ENCODE measurements at regions of chr13 and their contacts with region 1.

Region 1: DNA sequence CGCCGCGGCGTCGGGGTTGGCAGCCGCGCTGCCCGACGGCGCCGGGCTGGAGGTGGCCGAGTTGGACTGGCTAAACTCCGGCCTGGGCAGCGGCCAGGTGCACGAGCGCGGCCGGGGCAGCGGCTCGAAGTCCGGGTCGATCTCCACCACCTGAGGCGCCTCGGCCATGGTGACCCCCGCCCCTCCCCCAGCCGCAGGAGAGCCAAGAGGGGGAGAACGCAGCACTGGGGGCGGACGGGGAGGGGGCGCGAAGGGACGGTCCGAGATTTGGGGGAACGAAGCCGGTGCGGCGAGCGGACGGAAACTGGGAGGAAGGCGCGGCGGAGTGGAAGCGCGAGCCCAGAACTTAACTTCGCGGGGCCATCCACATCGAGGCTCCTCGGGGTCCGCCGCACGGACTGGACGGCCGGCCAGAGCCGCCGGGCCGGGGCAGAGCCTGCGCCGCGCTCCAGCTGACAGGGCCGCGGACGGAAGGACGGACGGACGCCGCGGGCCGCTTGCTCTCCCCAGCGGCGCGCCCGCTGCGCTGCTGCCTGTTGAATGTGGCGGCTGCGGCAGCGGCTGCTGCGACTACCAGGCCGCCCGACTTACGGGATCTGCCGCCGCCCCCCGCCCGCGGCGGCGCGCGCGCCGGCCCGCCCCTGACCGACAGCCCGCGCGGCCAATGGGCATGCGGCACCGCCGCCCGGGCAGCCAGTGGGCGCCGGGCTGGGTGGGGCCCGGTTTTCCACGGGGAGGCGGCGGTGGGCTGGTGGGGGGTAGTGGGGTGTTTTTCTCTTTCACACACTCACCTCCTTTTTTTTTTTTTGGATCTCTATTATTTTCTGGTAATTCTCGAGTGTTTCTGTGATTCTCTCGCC is at the start of gene FOXO1:
- DNase-seq: peak; percentile 93 to 94
- ATAC-seq: peak; percentile 70 to 89 (median 82)
- H3K4me3 ChIP-seq: peak within 1 kb of the TSS; percentile 90
- H3K4me3 Mint-ChIP-seq: peak within 1 kb of the TSS; percentile 92
- H3K27ac ChIP-seq: peak within 1 kb of the TSS; percentile 83
- H3K27ac Mint-ChIP-seq: peak within 1 kb of the TSS; percentile 83 to 95
- H3K4me1 ChIP-seq: peaks cover 21% of the 10 kb centered on the region
- H3K4me1 Mint-ChIP-seq: peaks cover 29 to 33% of the 10 kb centered on the region in 2 donors
- H3K27me3 ChIP-seq: no peaks in the 10 kb centered on the region
- H3K27me3 Mint-ChIP-seq: no peaks in the 10 kb centered on the region
- CTCF ChIP-seq: no peak
- total RNA-seq, gene FOXO1: 23.9 to 29.8 (median 27.6) TPM

Region 2: DNA sequence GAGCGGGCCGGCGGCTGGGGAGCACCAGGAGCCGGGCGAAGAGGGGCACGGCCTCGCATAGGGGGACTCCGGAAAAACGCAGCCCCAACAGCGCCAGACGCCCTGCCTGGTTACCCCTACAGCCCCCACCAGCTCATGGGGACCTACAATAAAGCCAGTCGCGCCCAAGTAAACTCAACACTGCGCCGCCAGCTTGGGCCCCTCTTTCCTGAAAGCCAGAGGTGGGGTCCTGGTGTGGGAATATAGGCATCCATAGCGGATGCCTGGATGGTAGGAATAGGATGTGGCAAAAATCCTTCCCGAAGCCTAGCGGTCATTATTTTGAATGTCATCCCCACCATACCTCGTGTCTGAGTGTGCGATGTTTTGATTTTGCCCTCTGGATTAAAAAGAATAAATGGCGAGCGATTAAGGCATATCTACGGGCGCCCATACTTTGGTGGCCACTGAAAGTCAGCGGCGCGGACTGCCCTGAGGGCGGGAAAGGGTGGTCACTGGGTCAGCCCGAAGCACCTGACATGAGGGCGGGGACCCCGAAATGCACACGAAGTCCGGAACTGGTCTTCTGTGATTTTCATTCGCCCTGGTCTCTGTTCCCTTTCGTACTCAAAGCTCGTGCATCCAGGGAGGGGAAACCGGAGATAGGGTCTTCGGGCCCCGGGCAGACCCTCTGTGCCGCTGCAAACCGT is 1628.3 kb before region 1 on chr13 and contains the starts of genes NHLRC3 and PROSER1:
- intact Hi-C with region 1: loop called (anchors 5 kb)
- DNase-seq: peak; percentile 75 to 92
- ATAC-seq: peak; percentile 77 to 91 (median 80)
- H3K4me3 ChIP-seq: peak within 1 kb of the TSS; percentile 60
- H3K4me3 Mint-ChIP-seq: peak within 1 kb of the TSS; percentile 93
- H3K27ac ChIP-seq: peak within 1 kb of the TSS; percentile 92
- H3K27ac Mint-ChIP-seq: peak within 1 kb of the TSS; percentile 96
- H3K4me1 ChIP-seq: peaks cover 4% of the 10 kb centered on the region
- H3K4me1 Mint-ChIP-seq: peaks cover 59 to 72% of the 10 kb centered on the region in 2 donors
- H3K27me3 ChIP-seq: no peaks in the 10 kb centered on the region
- H3K27me3 Mint-ChIP-seq: no peaks in the 10 kb centered on the region
- CTCF ChIP-seq: no peak
- total RNA-seq, gene NHLRC3: 26.0 to 36.8 (median 28.3) TPM
- total RNA-seq, gene PROSER1: 58.6 to 70.2 (median 61.7) TPM

Region 3: GRCh38 chr13:40221460-40222201 is 444.6 kb before region 1 on chr13:
- intact Hi-C with region 1: loop called (anchors 10 kb)
- DNase-seq: peak; percentile 24 to 84
- ATAC-seq: peak; percentile 71 to 76 (median 73)
- H3K4me3 ChIP-seq: no peak overlapping the region
- H3K4me3 Mint-ChIP-seq: peak overlapping the region; percentile 32
- H3K27ac ChIP-seq: peak overlapping the region; percentile 70
- H3K27ac Mint-ChIP-seq: peak overlapping the region; percentile 74 to 88
- H3K4me1 ChIP-seq: peaks cover 21% of the 10 kb centered on the region
- H3K4me1 Mint-ChIP-seq: peaks cover 33 to 34% of the 10 kb centered on the region in 2 donors
- H3K27me3 ChIP-seq: no peaks in the 10 kb centered on the region
- H3K27me3 Mint-ChIP-seq: no peaks in the 10 kb centered on the region
- CTCF ChIP-seq: no peak

Region 4: GRCh38 chr13:40388617-40389016 is 277.7 kb before region 1 on chr13:
- intact Hi-C with region 1: loop called (anchors 1 kb)
- DNase-seq: peak; percentile 75 to 93
- ATAC-seq: peak; percentile 90 to 97 (median 94)
- H3K4me3 ChIP-seq: peak overlapping the region; percentile 45
- H3K4me3 Mint-ChIP-seq: peak overlapping the region; percentile 84
- H3K27ac ChIP-seq: peak overlapping the region; percentile 99
- H3K27ac Mint-ChIP-seq: peak overlapping the region; percentile 93 to 97
- H3K4me1 ChIP-seq: peaks cover 25% of the 10 kb centered on the region
- H3K4me1 Mint-ChIP-seq: peaks cover 42% of the 10 kb centered on the region in 2 donors
- H3K27me3 ChIP-seq: no peaks in the 10 kb centered on the region
- H3K27me3 Mint-ChIP-seq: no peaks in the 10 kb centered on the region
- CTCF ChIP-seq: no peak

Region 5: DNA sequence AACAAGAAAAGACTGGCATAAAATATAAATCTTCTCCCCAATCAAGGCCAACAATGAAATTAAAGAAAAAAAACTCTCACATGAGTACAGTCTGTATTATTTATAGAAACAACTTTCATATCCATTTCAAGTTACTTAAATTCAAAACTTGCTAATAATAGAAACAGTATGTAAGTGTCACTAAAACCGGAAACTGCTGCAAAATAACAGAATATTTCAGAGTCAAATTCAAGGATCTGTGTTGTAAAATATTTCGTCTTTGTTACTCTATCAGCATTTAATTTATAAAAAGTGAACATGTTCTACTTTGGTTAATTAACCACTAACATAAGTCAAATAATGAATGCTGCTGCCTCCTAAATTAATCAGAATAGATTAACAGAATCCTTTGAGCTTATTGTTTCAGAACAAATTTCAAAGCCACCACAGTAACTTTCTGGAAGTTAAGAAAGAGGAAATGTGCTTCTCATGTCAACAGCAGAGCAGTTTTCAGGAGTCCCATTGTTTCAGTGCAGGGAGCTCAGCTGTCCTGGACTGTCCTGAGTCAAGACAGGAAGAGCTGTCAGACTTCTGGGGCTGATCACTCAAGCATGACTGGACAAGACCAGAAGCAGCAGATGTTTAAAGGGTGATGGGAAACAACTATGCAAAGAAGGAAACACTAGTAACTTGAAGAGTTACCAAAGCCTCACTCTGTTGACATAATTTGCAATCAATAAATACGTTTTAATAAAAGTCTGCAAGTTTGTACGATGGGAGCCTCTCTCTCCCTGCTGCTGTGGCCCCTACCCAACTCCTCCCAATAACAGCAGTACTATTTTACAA is 76.8 kb before region 1 on chr13:
- intact Hi-C with region 1: loop called (anchors 5 kb)
- DNase-seq: peak in 1 of 2 donors; percentile 27
- ATAC-seq: peak; percentile 69 to 77 (median 75)
- H3K4me3 ChIP-seq: no peak overlapping the region
- H3K4me3 Mint-ChIP-seq: peak overlapping the region; percentile 51
- H3K27ac ChIP-seq: peak overlapping the region; percentile 60
- H3K27ac Mint-ChIP-seq: peak overlapping the region; percentile 82 to 86
- H3K4me1 ChIP-seq: peaks cover 17% of the 10 kb centered on the region
- H3K4me1 Mint-ChIP-seq: peaks cover 69 to 73% of the 10 kb centered on the region in 2 donors
- H3K27me3 ChIP-seq: no peaks in the 10 kb centered on the region
- H3K27me3 Mint-ChIP-seq: no peaks in the 10 kb centered on the region
- CTCF ChIP-seq: no peak

Region 6: GRCh38 chr13:40613192-40613818 is 53.0 kb before region 1 on chr13:
- intact Hi-C with region 1: loop called (anchors 2 kb)
- DNase-seq: peak; percentile 51 to 85
- ATAC-seq: peak; percentile 85 to 90 (median 87)
- H3K4me3 ChIP-seq: peak overlapping the region; percentile 23
- H3K4me3 Mint-ChIP-seq: peak overlapping the region; percentile 90
- H3K27ac ChIP-seq: peak overlapping the region; percentile 98
- H3K27ac Mint-ChIP-seq: peak overlapping the region; percentile 94 to 99
- H3K4me1 ChIP-seq: peaks cover 35% of the 10 kb centered on the region
- H3K4me1 Mint-ChIP-seq: peaks cover 31 to 46% of the 10 kb centered on the region in 2 donors
- H3K27me3 ChIP-seq: no peaks in the 10 kb centered on the region
- H3K27me3 Mint-ChIP-seq: no peaks in the 10 kb centered on the region
- CTCF ChIP-seq: no peak

Region 7: GRCh38 chr13:40777166-40777808 is 111.0 kb after region 1 on chr13:
- intact Hi-C with region 1: loop called (anchors 5 kb)
- DNase-seq: peak; percentile 30 to 79
- ATAC-seq: peak; percentile 77 to 86 (median 82)
- H3K4me3 ChIP-seq: no peak overlapping the region
- H3K4me3 Mint-ChIP-seq: peak overlapping the region; percentile 79
- H3K27ac ChIP-seq: peak overlapping the region; percentile 70
- H3K27ac Mint-ChIP-seq: peak overlapping the region; percentile 87 to 94
- H3K4me1 ChIP-seq: peaks cover 20% of the 10 kb centered on the region
- H3K4me1 Mint-ChIP-seq: peaks cover 19 to 24% of the 10 kb centered on the region in 2 donors
- H3K27me3 ChIP-seq: no peaks in the 10 kb centered on the region
- H3K27me3 Mint-ChIP-seq: no peaks in the 10 kb centered on the region
- CTCF ChIP-seq: peak; percentile 80